K562 (cell line): ENCODE measurements at regions of chr1 and their contacts with region 1.

Region 1: GRCh38 chr1:21451212-21451812 is 11.4 kb downstream of the NBPF3 start:
- DNase-seq: no peak
- ATAC-seq: no peak
- H3K4me3 ChIP-seq: no peak overlapping the region
- H3K27ac ChIP-seq: no peak overlapping the region
- H3K4me1 ChIP-seq: peaks cover 0 to 26% of the 10 kb centered on the region in 2 experiments; a peak in 4 of 5 replicates
- H3K27me3 ChIP-seq: no peaks in the 10 kb centered on the region
- CTCF ChIP-seq: no peak
- EP300 ChIP-seq: no peak
- POLR2A ChIP-seq: no peak
- RAD21 ChIP-seq: no peak

Region 2: DNA sequence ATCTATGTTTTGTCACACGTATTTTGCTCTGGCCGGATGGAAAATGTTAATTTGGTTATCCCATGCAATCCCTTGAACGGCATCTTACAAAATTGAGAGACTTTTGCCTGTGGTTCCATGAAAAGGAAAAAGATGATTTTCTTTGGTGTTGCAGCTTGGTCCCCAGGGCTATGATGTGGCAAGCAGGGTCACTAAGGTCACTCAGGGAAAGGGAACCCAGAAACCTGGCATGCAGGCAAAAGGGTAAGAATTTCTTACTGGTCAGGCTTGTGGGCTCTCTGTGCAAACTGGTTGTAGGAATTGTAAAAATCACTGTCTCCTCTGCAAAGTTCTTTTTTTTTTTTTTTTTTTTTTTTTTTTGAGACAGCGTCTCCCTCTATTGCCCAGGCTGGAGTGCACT is 59.8 kb before region 1 on chr1:
- CTCF ChIA-PET with region 1: no interaction called
- POLR2A ChIA-PET with region 1: interaction called, 3 read pairs
- in situ Hi-C with region 1: loop called (anchors 5 kb)
- intact Hi-C with region 1: loop called (anchors 5 kb)
- DNase-seq: no peak
- ATAC-seq: no peak
- H3K4me3 ChIP-seq: no peak overlapping the region
- H3K27ac ChIP-seq: no peak overlapping the region
- H3K4me1 ChIP-seq: peaks cover 9 to 18% of the 10 kb centered on the region in 2 experiments; a peak in 4 of 5 replicates
- H3K27me3 ChIP-seq: no peaks in the 10 kb centered on the region
- CTCF ChIP-seq: no peak
- EP300 ChIP-seq: no peak
- POLR2A ChIP-seq: no peak
- RAD21 ChIP-seq: no peak

Region 3: GRCh38 chr1:21397813-21398188 is 53.5 kb before region 1 on chr1:
- CTCF ChIA-PET with region 1: no interaction called
- POLR2A ChIA-PET with region 1: no interaction called
- in situ Hi-C with region 1: loop called (anchors 5 kb)
- intact Hi-C with region 1: loop called (anchors 5 kb)
- DNase-seq: peak; percentile 25 to 40 (median 32)
- ATAC-seq: peak; percentile 68
- H3K4me3 ChIP-seq: no peak overlapping the region
- H3K27ac ChIP-seq: no peak overlapping the region
- H3K4me1 ChIP-seq: peaks cover 4 to 6% of the 10 kb centered on the region in 2 experiments; a peak in 4 of 5 replicates
- H3K27me3 ChIP-seq: no peaks in the 10 kb centered on the region
- CTCF ChIP-seq: no peak
- EP300 ChIP-seq: no peak; the same call in 1 of the 2 replicates
- POLR2A ChIP-seq: no peak
- RAD21 ChIP-seq: no peak

Region 4: GRCh38 chr1:21414015-21414414 is 37.3 kb before region 1 on chr1:
- CTCF ChIA-PET with region 1: no interaction called
- POLR2A ChIA-PET with region 1: no interaction called
- in situ Hi-C with region 1: no loop called
- intact Hi-C with region 1: no loop called
- DNase-seq: no peak
- ATAC-seq: no peak
- H3K4me3 ChIP-seq: no peak overlapping the region
- H3K27ac ChIP-seq: no peak overlapping the region
- H3K4me1 ChIP-seq: no peaks in the 10 kb centered on the region; a peak in 1 of 5 replicates
- H3K27me3 ChIP-seq: peaks cover 0 to 13% of the 10 kb centered on the region in 2 experiments; a peak in 3 of 5 replicates
- CTCF ChIP-seq: no peak
- EP300 ChIP-seq: no peak
- POLR2A ChIP-seq: no peak
- RAD21 ChIP-seq: no peak